CD14-positive monocyte (primary cell): ENCODE measurements at regions of chr15 and their contacts with region 1.

Region 1: DNA sequence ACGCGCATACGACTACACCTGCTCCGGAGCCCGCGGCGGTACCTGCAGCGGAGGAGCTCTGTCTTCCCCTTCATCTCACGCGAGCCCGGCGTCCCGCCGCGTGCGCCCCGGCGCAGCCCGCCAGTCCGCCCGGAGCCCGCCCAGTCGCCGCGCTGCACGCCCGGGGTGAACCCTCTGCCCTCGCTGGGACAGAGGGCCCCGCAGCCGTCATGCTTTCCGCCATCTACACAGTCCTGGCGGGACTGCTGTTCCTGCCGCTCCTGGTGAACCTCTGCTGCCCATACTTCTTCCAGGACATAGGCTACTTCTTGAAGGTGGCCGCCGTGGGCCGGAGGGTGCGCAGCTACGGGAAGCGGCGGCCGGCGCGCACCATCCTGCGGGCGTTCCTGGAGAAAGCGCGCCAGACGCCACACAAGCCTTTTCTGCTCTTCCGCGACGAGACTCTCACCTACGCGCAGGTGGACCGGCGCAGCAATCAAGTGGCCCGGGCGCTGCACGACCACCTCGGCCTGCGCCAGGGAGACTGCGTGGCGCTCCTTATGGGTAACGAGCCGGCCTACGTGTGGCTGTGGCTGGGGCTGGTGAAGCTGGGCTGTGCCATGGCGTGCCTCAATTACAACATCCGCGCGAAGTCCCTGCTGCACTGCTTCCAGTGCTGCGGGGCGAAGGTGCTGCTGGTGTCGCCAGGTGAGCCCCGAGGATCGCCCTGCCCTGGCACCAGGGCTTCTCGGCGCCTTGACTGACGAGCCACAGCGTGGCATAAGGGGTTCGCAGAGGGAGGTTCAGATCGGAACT is 420 bp downstream of the SLC27A2 start:
- DNase-seq: peak in 2 of 3 donors; percentile 1 to 20
- H3K4me3 ChIP-seq: peak overlapping the region; percentile 49 to 79 (median 49)
- H3K4me3 Mint-ChIP-seq: peak overlapping the region; percentile 91 to 97
- H3K27ac ChIP-seq: no peak overlapping the region
- H3K27ac Mint-ChIP-seq: peak overlapping the region in 2 of 7 donors; percentile 26 to 36
- H3K4me1 ChIP-seq: peaks cover 10 to 15% of the 10 kb centered on the region in 2 donors
- H3K4me1 Mint-ChIP-seq: peaks cover 20% of the 10 kb centered on the region
- H3K27me3 ChIP-seq: peaks cover 15 to 25% of the 10 kb centered on the region in 2 donors
- H3K27me3 Mint-ChIP-seq: peaks cover 21 to 32% (median 29%) of the 10 kb centered on the region in 3 donors
- CTCF ChIP-seq: peak; percentile 11

Region 2: DNA sequence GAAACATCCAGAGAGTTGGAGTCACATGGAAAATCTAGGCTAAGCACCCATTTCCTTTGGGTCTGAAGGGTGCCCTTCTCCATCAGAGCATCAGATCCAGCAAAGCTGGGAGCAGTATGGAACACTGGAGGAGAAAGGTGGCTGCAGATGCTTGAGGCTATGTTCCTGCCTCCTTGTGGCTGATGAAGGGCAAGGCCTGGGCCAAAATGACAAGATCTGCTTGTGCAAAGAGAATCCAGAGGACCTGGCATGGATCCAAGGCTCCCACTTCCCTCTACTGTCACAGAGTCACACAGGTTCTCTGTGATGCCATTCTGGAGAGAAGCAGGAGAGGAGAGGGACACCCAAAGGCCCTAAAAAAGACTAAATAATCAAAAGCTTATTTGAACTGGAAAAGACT is 54.1 kb before region 1 on chr15:
- intact Hi-C with region 1: no loop called
- DNase-seq: peak; percentile 85 to 92 (median 89)
- H3K4me3 ChIP-seq: no peak overlapping the region
- H3K4me3 Mint-ChIP-seq: no peak overlapping the region
- H3K27ac ChIP-seq: peak overlapping the region in 1 of 2 donors; percentile 20
- H3K27ac Mint-ChIP-seq: peak overlapping the region; percentile 16 to 91 (median 74)
- H3K4me1 ChIP-seq: peaks cover 12 to 31% of the 10 kb centered on the region in 2 donors
- H3K4me1 Mint-ChIP-seq: peaks cover 34% of the 10 kb centered on the region
- H3K27me3 ChIP-seq: no peaks in the 10 kb centered on the region
- H3K27me3 Mint-ChIP-seq: peaks cover 0 to 2% (median 2%) of the 10 kb centered on the region in 3 donors
- CTCF ChIP-seq: peak; percentile 67

Region 3: DNA sequence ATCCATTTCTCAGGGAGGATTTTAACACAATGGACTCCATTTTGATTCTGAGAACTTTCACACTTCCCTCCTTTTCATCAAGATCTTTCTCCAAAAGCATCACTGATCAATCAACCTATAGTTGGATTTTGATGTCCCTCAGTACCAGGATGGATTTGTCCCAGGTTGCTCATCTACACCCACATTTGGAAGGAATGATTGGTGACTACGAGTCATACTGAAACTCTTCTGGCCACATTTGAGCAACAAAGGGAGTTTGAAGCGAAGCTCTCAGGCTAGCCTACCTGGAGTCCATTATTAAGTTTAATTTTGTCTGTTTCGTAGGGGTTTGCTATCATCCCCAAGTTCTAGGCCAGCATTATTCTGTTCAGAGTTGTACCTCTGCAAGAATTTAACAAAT is 32.1 kb before region 1 on chr15:
- intact Hi-C with region 1: no loop called
- DNase-seq: no peak
- H3K4me3 ChIP-seq: no peak overlapping the region
- H3K4me3 Mint-ChIP-seq: no peak overlapping the region
- H3K27ac ChIP-seq: no peak overlapping the region
- H3K27ac Mint-ChIP-seq: no peak overlapping the region
- H3K4me1 ChIP-seq: peaks cover 10 to 13% of the 10 kb centered on the region in 2 donors
- H3K4me1 Mint-ChIP-seq: peaks cover 11% of the 10 kb centered on the region
- H3K27me3 ChIP-seq: no peaks in the 10 kb centered on the region
- H3K27me3 Mint-ChIP-seq: peaks cover 0 to 2% (median 0%) of the 10 kb centered on the region in 3 donors
- CTCF ChIP-seq: no peak

Region 4: DNA sequence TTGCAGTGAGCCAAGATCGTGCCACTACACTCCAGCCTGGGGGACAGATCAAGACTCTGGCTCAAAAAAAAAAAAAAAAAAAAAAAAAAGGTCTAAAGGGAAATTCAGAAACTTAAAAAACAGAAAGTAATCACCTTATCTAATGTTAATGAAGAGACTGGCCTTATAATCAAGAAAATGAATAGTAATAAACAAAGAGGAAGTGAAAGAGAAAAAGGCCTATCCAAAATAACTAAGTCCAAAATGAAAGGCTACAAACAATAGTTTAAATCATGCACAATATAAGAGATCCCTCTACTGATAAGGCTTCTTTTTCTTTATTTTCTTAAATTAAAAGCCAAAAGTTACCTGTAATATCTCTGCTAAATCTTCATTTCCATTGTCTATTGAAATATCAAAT is 120.2 kb after region 1 on chr15:
- intact Hi-C with region 1: loop called in 1 of 2 experiments (anchors 10 kb)
- DNase-seq: no peak
- H3K4me3 ChIP-seq: no peak overlapping the region
- H3K4me3 Mint-ChIP-seq: no peak overlapping the region
- H3K27ac ChIP-seq: no peak overlapping the region
- H3K27ac Mint-ChIP-seq: peak overlapping the region in 3 of 7 donors; percentile 31 to 64 (median 37)
- H3K4me1 ChIP-seq: peaks cover 0 to 7% of the 10 kb centered on the region in 2 donors
- H3K4me1 Mint-ChIP-seq: peaks cover 6% of the 10 kb centered on the region
- H3K27me3 ChIP-seq: no peaks in the 10 kb centered on the region
- H3K27me3 Mint-ChIP-seq: peaks cover 0 to 2% (median 0%) of the 10 kb centered on the region in 3 donors
- CTCF ChIP-seq: no peak

Region 5: DNA sequence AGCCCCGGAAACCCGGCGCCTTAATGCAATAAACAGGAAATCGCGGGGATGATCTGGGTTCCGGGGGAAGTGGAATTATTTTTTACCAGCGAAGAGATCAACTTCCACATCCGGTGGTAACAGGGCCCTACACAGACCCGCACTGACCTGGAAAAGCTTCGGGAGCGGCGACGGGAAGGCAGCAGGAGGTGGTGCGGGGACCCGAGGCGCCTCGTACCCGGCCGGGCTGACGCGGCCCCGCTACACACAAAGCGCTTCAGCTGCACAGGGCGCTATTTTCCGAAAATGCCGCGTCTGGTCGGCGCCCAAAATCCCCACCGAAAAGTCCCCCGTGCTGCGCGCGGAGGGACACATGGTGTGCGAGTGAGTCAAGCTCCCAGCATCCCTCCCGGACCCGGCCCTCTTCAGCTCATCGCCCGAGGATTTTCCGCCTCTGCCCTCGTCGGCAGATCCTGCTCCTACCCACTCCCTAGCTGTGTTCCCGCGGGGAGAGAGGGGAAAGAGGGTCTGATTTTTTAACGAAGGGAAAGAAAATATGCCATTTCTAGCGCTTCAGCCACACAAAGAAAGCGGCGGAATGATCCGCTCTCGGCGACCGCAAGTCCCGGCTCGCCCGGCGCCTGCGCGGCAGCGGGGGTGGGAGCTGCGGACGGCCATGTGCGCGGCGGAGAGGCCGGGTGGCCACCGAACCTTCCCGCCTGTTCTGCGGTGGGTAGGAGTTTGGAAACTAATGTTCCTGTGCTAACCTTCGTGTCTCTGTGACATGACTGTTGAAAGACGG is 172.6 kb after region 1 on chr15 and contains the start of gene GABPB1:
- intact Hi-C with region 1: no loop called
- DNase-seq: peak; percentile 85 to 95 (median 88)
- H3K4me3 ChIP-seq: peak within 1 kb of the TSS; percentile 75 to 90 (median 84)
- H3K4me3 Mint-ChIP-seq: peak within 1 kb of the TSS; percentile 93 to 96
- H3K27ac ChIP-seq: peak within 1 kb of the TSS; percentile 95 to 96
- H3K27ac Mint-ChIP-seq: peak within 1 kb of the TSS; percentile 99 to 100 (median 99)
- H3K4me1 ChIP-seq: peaks cover 45 to 55% of the 10 kb centered on the region in 2 donors
- H3K4me1 Mint-ChIP-seq: peaks cover 48% of the 10 kb centered on the region
- H3K27me3 ChIP-seq: no peaks in the 10 kb centered on the region
- H3K27me3 Mint-ChIP-seq: no peaks in the 10 kb centered on the region
- CTCF ChIP-seq: no peak
- polyA plus RNA-seq, gene GABPB1: 12.9 to 15.1 (median 14.9) TPM